BJ (cell line): ENCODE measurements at regions of chr10 and their contacts with region 1.

Region 1: GRCh38 chr10:31739711-31740110 is 188.9 kb downstream of the ARHGAP12 start:
- DNase-seq: peak; percentile 97
- H3K4me3 ChIP-seq: no peak overlapping the region
- H3K27me3 ChIP-seq: no peaks in the 10 kb centered on the region
- CTCF ChIP-seq: no peak

Region 2: GRCh38 chr10:31620226-31621151 is 119.2 kb before region 1 on chr10:
- CTCF ChIA-PET with region 1: no interaction called
- POLR2A ChIA-PET with region 1: no interaction called
- DNase-seq: no peak
- H3K4me3 ChIP-seq: no peak overlapping the region
- H3K27me3 ChIP-seq: no peaks in the 10 kb centered on the region
- CTCF ChIP-seq: peak; percentile 55

Region 3: DNA sequence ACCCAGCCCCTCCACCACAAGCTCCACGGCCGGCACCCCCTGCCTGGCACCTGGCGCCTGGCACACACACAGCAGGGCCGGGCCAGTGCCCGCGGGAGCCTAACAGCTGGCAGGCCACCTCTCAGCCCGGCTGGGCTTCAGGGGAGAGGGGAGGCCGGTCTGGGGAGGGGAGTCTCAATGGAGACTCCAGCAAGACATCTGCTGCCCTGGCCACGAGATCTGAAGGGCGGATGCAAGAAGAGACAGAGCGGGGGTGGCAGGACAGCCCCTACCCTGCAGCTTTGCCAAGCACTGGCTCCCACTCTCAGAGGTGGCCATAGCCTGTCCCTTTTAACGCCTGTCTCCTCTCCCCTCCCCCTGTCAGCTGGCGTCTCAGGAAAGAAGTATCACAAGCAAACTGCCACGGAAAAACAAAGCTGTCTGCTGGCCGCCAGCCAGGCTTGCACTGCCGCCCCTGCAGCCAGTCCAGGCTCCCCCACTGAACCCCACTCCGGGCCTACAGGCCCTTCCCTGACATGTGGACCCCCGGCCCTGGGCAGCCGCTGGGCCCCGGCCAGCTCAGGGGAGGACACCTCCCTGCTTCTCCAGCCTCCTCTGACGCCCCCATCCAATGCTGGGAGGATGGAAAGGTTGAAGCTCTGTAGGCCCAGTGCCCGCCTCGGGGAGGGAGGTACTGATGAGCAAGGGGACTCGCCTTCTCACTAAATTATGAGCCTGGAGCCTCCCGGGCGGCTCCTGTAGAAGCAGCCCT is 10.4 kb after region 1 on chr10:
- CTCF ChIA-PET with region 1: interaction called, 17 read pairs
- POLR2A ChIA-PET with region 1: no interaction called
- DNase-seq: no peak
- H3K4me3 ChIP-seq: no peak overlapping the region
- H3K27me3 ChIP-seq: no peaks in the 10 kb centered on the region
- CTCF ChIP-seq: no peak